ENCODE measurements at regions of chr17 and their contacts with region 1.

Region 1: DNA sequence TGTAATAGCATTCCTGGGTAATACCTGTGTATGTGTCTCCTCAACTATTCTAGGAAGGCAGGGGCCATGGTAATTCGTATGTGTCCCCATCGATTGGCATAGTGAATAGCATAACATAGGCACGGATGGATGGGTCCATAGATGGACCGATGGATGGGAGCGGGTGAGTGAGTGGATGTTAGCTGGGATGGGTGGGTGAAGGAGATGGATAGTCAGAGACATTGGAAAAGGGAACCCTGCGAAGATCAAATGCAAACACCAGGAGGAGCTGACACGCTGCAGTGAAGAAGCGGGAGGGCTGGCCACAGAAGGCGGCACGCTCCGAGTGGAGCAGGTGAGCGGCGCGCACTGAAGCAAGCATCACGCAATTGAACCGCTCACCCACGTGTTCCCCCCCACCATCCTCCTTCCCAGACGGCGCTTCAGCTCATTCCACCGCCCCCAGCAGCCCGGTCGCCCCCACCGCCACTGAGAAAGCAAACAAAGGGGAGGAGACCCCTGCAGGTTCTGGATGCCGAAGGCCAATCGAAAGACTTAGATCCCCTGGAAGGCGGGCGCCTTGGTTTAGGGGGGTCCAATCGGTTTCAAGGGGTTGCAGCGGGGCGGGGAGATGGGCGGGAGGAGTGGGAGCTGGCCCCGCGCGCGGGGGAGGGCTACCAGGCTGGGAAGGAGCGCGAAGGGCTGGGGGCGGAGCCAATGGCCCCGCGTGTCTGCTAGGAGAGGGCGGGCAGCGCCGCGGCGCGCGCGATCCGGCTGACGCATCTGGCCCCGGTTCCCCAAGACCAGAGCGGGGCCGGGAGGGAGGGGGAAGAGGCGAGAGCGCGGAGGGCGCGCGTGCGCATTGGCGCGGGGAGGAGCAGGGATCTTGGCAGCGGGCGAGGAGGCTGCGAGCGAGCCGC is at the start of gene ARRB2:
- DNase-seq: peak; percentile 97 to 99
- H3K4me3 ChIP-seq: peak within 1 kb of the TSS; percentile 52 to 77
- H3K27ac ChIP-seq: peak within 1 kb of the TSS; percentile 67 to 75
- H3K4me1 ChIP-seq: peaks cover 0 to 5% of the 10 kb centered on the region in 2 donors
- H3K27me3 ChIP-seq: no peaks in the 10 kb centered on the region
- CTCF ChIP-seq: peak; percentile 40 to 84 (median 62)
- total RNA-seq, gene ARRB2: 43.4 TPM

Region 2: GRCh38 chr17:4625181-4625617 is 84.8 kb before region 1 on chr17:
- intact Hi-C with region 1: no loop called
- DNase-seq: no peak
- H3K4me3 ChIP-seq: no peak overlapping the region
- H3K27ac ChIP-seq: no peak overlapping the region
- H3K4me1 ChIP-seq: peaks cover 0 to 4% of the 10 kb centered on the region in 2 donors
- H3K27me3 ChIP-seq: no peaks in the 10 kb centered on the region
- CTCF ChIP-seq: no peak

Region 3: GRCh38 chr17:4891411-4892342 is 181.6 kb after region 1 on chr17:
- intact Hi-C with region 1: loop called (anchors 5 kb)
- DNase-seq: no peak
- H3K4me3 ChIP-seq: no peak overlapping the region
- H3K27ac ChIP-seq: no peak overlapping the region
- H3K4me1 ChIP-seq: no peaks in the 10 kb centered on the region
- H3K27me3 ChIP-seq: no peaks in the 10 kb centered on the region
- CTCF ChIP-seq: no peak

Measured in ascending aorta (tissue), 2 donors.